ENCODE measurements at regions of chr15 and their contacts with region 1.

Region 1: GRCh38 chr15:44584162-44584749 is 47.3 kb downstream of the EIF3J start:
- DNase-seq: peak; percentile 56 to 76 (median 72)
- H3K4me3 ChIP-seq: no peak overlapping the region
- H3K27ac ChIP-seq: no peak overlapping the region
- H3K4me1 ChIP-seq: no peaks in the 10 kb centered on the region
- H3K27me3 ChIP-seq: no peaks in the 10 kb centered on the region

Region 2: DNA sequence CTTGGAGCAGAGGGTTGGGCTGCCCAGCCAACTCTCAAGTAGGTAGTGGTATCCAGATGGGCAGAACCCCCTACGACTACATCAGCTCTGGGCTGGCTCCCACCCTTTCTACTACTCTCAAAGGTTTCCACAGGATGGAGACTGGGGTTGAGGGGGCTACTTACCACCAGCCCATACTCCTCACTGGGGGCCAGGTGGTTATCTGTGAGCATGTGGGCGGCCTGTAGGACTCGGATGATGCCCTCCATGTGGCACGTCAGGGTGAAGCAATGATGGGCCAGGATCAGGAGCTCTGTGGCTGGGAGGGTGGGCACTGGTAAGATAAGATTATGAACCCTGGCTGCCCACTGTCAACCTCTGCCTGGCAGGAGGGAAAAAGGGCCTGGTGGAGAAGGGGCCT is 13.9 kb before region 1 on chr15:
- CTCF ChIA-PET with region 1: interaction called, 50 read pairs
- POLR2A ChIA-PET with region 1: no interaction called
- DNase-seq: no peak
- H3K4me3 ChIP-seq: no peak overlapping the region
- H3K27ac ChIP-seq: no peak overlapping the region
- H3K4me1 ChIP-seq: no peaks in the 10 kb centered on the region
- H3K27me3 ChIP-seq: no peaks in the 10 kb centered on the region

Region 3: DNA sequence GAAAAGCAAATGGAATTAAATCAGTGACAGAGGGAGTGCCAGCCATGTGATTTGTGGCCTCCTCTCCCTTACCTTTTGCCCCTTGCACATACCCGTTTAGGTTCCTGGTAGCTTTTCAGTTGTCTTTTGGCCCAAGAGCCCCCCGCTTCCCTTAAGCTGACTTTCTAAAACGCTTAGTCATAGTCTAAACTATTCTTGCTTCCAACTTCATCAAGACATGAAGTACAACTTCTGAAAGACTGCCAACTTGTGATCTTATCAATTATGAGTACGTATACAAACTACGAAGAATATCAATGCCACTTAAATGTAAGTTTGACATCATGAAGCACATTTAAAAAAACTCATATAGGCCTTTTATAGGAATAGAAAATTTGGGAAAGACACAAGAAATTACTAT is 14.6 kb after region 1 on chr15:
- CTCF ChIA-PET with region 1: interaction called, 10 read pairs
- POLR2A ChIA-PET with region 1: no interaction called
- DNase-seq: peak; percentile 69 to 88 (median 79)
- H3K4me3 ChIP-seq: peak overlapping the region in 1 of 7 experiments; percentile 2
- H3K27ac ChIP-seq: peak overlapping the region in 1 of 2 experiments; percentile 25
- H3K4me1 ChIP-seq: peaks cover 0 to 13% (median 6%) of the 10 kb centered on the region in 4 experiments
- H3K27me3 ChIP-seq: no peaks in the 10 kb centered on the region

Measured in common myeloid progenitor, CD34-positive (primary cell).